ENCODE measurements at regions of chr12 and their contacts with region 1.

Region 1: GRCh38 chr12:12094481-12094880 is 23.7 kb downstream of the BCL2L14 start:
- DNase-seq: no peak
- H3K27ac ChIP-seq: no peak overlapping the region
- CTCF ChIP-seq: no peak

Region 2: DNA sequence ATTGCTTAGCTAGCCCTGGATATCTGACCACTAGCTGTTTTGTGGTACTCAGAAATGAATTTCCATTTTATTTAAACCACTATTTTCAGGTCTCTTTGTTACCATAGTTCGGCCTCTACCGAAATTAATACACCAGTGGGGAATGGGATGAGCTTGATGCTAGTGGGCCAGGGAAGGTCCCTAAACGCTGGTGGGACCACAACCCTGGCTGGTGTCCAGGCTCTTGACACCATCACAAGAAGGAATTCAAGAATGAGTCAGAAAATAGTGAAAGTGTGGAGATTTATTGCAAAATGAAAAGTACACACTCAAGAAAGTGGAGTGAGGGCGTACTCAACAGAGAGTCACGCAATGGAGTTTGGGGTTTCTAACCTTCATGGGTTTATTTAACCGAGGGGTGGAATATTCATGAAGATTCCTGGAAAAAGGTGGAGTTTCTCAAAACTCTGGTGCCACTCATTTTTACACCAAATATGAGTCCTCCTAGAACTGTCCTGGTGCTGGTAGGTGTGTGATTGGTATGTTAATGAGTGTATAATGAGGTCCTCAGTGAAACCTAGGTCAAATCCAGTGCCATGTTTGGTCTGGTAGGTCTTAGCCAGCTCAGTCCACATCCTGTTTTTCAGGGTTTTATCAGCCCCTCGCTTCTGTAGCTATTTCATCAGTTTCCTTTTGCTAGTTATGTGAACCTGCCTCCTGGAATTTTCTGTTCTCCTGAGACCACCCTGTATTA is 211.3 kb after region 1 on chr12:
- CTCF ChIA-PET with region 1: interaction called, 10 read pairs
- POLR2A ChIA-PET with region 1: no interaction called
- DNase-seq: no peak
- H3K27ac ChIP-seq: no peak overlapping the region
- CTCF ChIP-seq: no peak